Gastrocnemius medialis (tissue), 4 donors: ENCODE measurements at regions of chr1 and their contacts with region 1.

Region 1: GRCh38 chr1:231806623-231807495 is 180.3 kb downstream of the DISC1 start:
- DNase-seq: peak; percentile 15 to 55
- ATAC-seq: peak; percentile 39 to 61
- H3K4me3 ChIP-seq: no peak overlapping the region
- H3K27ac ChIP-seq: peak overlapping the region in 1 of 4 donors; percentile 52
- H3K4me1 ChIP-seq: no peaks in the 10 kb centered on the region
- H3K27me3 ChIP-seq: no peaks in the 10 kb centered on the region
- CTCF ChIP-seq: peak; percentile 47 to 75 (median 54)
- POLR2A ChIP-seq: no peak

Region 2: GRCh38 chr1:231643071-231643934 is 163.6 kb before region 1 on chr1:
- in situ Hi-C with region 1: no loop called
- intact Hi-C with region 1: loop called (anchors 5 kb)
- DNase-seq: no peak
- ATAC-seq: peak; percentile 85 to 88
- H3K4me3 ChIP-seq: no peak overlapping the region
- H3K27ac ChIP-seq: peak overlapping the region; percentile 50 to 76 (median 60)
- H3K4me1 ChIP-seq: peaks cover 17 to 18% of the 10 kb centered on the region in 2 donors
- H3K27me3 ChIP-seq: no peaks in the 10 kb centered on the region
- CTCF ChIP-seq: no peak
- POLR2A ChIP-seq: no peak